Sciatic nerve (tissue), 2 donors: ENCODE measurements at regions of chrX and their contacts with region 1.

Region 1: GRCh38 chrX:152821145-152821765 is 9.3 kb downstream of the CETN2 start:
- DNase-seq: no peak
- ATAC-seq: no peak

Region 2: GRCh38 chrX:150870487-150871340 is 1950.5 kb before region 1 on chrX:
- intact Hi-C with region 1: no loop called
- DNase-seq: no peak
- ATAC-seq: no peak

Region 3: DNA sequence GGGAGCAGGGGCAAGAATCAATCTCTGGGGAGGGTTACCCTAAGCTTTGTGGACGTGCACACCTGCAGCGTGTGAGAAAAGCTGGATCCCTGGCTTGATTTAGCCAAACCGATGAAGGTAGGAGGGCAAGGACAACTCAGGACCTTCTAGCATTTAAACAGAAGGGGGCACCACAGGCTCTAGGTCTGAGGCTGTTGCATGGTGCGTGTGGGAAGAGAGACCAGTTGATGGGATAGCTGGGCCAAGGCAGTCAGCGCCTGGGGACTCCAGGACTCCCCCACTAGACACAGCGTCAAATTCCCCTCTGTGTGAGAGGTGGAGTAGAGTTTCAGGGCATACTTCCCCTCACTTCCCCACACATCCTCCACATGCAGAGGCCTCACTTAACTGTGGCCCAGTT is 179.3 kb before region 1 on chrX:
- intact Hi-C with region 1: loop called (anchors 10 kb)
- DNase-seq: no peak
- ATAC-seq: no peak